Adrenal gland (tissue), 19 donors: ENCODE measurements at regions of chr9 and their contacts with region 1.

Region 1: GRCh38 chr9:37602817-37603216 is 10.4 kb upstream of the TOMM5 start:
- DNase-seq: peak in 5 of 7 donors; percentile 17 to 53 (median 29)
- H3K4me3 ChIP-seq: no peak overlapping the region
- H3K27ac ChIP-seq: no peak overlapping the region
- H3K4me1 ChIP-seq: no peaks in the 10 kb centered on the region
- H3K27me3 ChIP-seq: no peaks in the 10 kb centered on the region
- CTCF ChIP-seq: no peak
- POLR2A ChIP-seq: no peak

Region 2: DNA sequence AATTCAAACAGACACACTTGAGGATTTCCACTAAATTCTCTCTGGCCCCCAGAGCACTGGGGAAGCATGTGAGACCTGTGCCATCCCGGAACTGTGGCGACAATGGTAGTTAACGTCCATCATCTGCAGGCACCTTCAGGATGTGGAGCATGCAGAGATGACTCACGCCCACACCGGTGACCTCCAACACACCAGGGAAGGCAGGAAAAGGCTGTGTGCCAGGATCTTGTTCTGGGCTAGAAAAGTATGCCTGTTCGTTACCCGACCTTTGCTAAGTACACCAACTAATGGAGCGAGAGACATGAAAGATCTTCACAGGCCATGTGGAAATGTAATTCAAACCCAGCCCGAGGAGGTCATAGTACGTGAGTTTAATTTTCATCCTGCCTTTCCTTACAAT is 821.3 kb before region 1 on chr9:
- intact Hi-C with region 1: no loop called
- DNase-seq: peak; percentile 48 to 80 (median 75)
- H3K4me3 ChIP-seq: no peak overlapping the region
- H3K27ac ChIP-seq: no peak overlapping the region
- H3K4me1 ChIP-seq: no peaks in the 10 kb centered on the region
- H3K27me3 ChIP-seq: no peaks in the 10 kb centered on the region
- CTCF ChIP-seq: no peak
- POLR2A ChIP-seq: no peak

Region 3: DNA sequence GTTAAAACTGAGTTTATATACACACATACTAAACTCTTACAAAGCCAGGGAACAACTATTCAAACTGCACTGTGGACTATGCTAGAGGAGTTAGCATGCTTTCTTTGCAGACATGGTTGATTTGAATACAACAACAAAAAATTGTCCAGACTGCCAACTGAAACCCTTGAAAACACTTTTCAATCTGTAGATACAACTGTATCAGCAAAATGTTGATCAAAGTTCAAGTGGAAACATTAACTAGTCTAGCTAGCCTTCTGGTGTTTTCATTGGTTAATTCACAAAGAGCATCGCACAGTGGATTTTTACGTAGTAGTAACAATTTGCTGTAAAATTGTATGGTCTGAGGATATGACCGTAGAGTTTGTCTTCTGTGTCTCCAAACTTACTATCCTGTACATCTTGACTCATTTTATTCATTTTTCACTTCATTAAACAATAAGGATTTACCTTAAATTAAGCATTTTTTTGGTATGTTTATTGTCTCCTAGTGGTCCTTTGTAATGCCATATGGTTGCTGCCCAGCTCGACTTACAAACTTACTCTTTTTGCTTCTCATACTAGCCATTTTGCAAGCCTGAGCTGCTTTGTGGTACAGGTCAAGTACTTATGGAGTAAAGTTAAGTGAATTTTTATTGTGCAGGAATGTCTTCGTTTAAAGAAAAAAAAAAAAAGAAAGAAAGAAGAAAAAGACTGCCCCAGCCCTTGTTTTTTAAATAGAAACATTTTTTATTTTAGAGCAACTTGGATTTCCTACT is 359.1 kb before region 1 on chr9:
- intact Hi-C with region 1: no loop called
- DNase-seq: no peak
- H3K4me3 ChIP-seq: no peak overlapping the region
- H3K27ac ChIP-seq: no peak overlapping the region
- H3K4me1 ChIP-seq: no peaks in the 10 kb centered on the region
- H3K27me3 ChIP-seq: no peaks in the 10 kb centered on the region
- CTCF ChIP-seq: no peak
- POLR2A ChIP-seq: no peak

Region 4: GRCh38 chr9:37732086-37732741 is 129.4 kb after region 1 on chr9:
- intact Hi-C with region 1: loop called in 1 of 2 experiments (anchors 10 kb)
- DNase-seq: no peak
- H3K4me3 ChIP-seq: no peak overlapping the region
- H3K27ac ChIP-seq: no peak overlapping the region
- H3K4me1 ChIP-seq: no peaks in the 10 kb centered on the region
- H3K27me3 ChIP-seq: no peaks in the 10 kb centered on the region
- CTCF ChIP-seq: no peak
- POLR2A ChIP-seq: no peak